Lower leg skin (tissue), 4 donors: ENCODE measurements at regions of chr12 and their contacts with region 1.

Region 1: GRCh38 chr12:124091835-124092234 is 118.8 kb downstream of the ZNF664 start:
- DNase-seq: peak in 1 of 2 donors; percentile 5
- H3K4me3 ChIP-seq: no peak overlapping the region
- CTCF ChIP-seq: no peak
- POLR2A ChIP-seq: no peak

Region 2: GRCh38 chr12:124123296-124124000 is 31.6 kb after region 1 on chr12:
- intact Hi-C with region 1: loop called (anchors 2 kb)
- DNase-seq: no peak
- H3K4me3 ChIP-seq: no peak overlapping the region
- CTCF ChIP-seq: no peak
- POLR2A ChIP-seq: no peak